SK-N-SH (cell line): ENCODE measurements at regions of chr2 and their contacts with region 1.

Region 1: GRCh38 chr2:181715033-181715630 is 34.8 kb upstream of the NEUROD1 start:
- DNase-seq: peak; percentile 51
- H3K4me3 ChIP-seq: no peak overlapping the region; a peak in 1 of 4 replicates
- H3K27ac ChIP-seq: no peak overlapping the region
- H3K4me1 ChIP-seq: no peaks in the 10 kb centered on the region
- H3K27me3 ChIP-seq: no peaks in the 10 kb centered on the region
- CTCF ChIP-seq: peak; percentile 85
- EP300 ChIP-seq: no peak
- RAD21 ChIP-seq: peak; percentile 99

Region 2: DNA sequence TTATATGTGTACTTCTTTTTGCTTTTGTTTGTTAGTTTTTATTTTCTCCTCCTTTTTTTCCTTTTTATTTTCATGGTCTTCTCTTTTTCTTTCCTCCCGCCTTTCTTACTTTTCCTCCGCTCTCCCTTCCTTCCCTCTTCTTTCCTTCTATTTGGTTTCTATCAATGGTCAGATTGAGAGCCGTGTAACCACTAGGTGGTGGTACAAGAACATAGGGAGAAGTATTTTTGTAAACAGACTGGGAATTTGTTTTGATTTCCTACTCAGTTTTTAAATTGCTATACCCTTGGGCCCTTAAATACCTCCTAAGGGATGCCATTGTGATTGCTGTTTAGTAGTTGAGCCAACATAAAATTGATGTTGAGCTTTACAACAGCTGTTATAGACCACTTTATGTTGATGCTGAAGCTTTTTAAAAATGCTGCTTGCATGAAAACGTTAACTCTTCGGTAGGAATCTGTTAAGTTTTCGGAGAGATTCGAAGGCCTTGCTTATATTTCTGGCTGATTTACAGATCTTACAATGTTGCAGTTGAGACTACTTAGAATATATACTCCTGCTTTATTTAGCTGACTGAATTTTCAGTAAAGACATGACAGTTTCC is 610.5 kb before region 1 on chr2:
- CTCF ChIA-PET with region 1: interaction called, 47 read pairs
- POLR2A ChIA-PET with region 1: no interaction called
- DNase-seq: peak; percentile 20
- H3K4me3 ChIP-seq: no peak overlapping the region; a peak in 1 of 4 replicates
- H3K27ac ChIP-seq: no peak overlapping the region; a peak in 1 of 4 replicates
- H3K4me1 ChIP-seq: peaks cover 16 to 19% of the 10 kb centered on the region in 2 experiments; a peak in 3 of 4 replicates
- H3K27me3 ChIP-seq: no peaks in the 10 kb centered on the region
- CTCF ChIP-seq: peak; percentile 89
- EP300 ChIP-seq: no peak
- RAD21 ChIP-seq: peak; percentile 89

Region 3: GRCh38 chr2:181573140-181573736 is 141.9 kb before region 1 on chr2:
- CTCF ChIA-PET with region 1: interaction called, 213 read pairs
- POLR2A ChIA-PET with region 1: no interaction called
- DNase-seq: peak; percentile 26
- H3K4me3 ChIP-seq: no peak overlapping the region; a peak in 1 of 4 replicates
- H3K27ac ChIP-seq: no peak overlapping the region
- H3K4me1 ChIP-seq: peaks cover 0 to 3% of the 10 kb centered on the region in 2 experiments; a peak in 1 of 4 replicates
- H3K27me3 ChIP-seq: no peaks in the 10 kb centered on the region
- CTCF ChIP-seq: peak; percentile 73
- EP300 ChIP-seq: no peak
- RAD21 ChIP-seq: peak; percentile 86

Region 4: DNA sequence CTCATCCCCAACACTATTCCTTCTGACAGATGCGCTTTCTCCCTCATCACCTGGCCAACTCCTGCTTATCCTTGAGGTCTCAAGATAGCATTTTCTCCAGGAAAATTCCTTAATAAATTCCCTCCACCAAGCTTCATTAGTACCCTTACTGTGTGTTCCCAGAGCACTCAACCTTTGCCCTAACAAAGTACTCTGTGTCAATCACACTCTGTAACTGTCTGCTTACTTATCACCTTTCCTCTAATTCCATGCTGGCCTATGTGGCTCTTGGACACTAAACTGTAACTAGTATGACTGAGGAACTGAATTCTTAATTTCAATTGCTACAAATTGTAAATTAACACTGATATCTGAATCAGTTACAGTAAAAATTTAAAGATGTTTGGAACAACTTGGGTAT is 16.9 kb before region 1 on chr2:
- CTCF ChIA-PET with region 1: interaction called, 11 read pairs
- POLR2A ChIA-PET with region 1: no interaction called
- DNase-seq: no peak
- H3K4me3 ChIP-seq: no peak overlapping the region
- H3K27ac ChIP-seq: no peak overlapping the region
- H3K4me1 ChIP-seq: no peaks in the 10 kb centered on the region
- H3K27me3 ChIP-seq: no peaks in the 10 kb centered on the region
- CTCF ChIP-seq: no peak
- EP300 ChIP-seq: no peak
- RAD21 ChIP-seq: no peak